ENCODE measurements at regions of chr16 and their contacts with region 1.

Region 1: DNA sequence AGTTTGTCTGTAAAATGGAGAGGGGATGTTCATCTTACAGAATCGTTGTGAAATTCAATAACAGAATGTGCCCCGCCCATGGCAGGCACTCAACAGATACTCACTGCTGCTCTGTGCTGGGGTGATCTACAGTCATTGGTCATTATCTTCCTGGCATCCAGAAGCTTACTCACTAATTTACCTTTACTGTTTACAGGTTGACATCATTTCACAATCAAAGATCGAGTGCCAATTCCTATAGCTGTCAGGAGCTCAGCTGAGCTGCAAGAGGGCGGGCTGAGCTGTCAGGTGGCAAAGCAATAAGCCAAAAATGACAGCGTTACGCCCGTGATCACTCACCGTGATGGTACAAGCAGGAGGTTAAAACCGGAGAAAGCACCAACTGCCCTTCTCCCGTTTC is 51.2 kb downstream of the LITAF start:
- DNase-seq: no peak
- ATAC-seq: no peak
- H3K4me3 Mint-ChIP-seq: no peak overlapping the region
- H3K27ac Mint-ChIP-seq: no peak overlapping the region
- H3K4me1 Mint-ChIP-seq: peaks cover 13% of the 10 kb centered on the region
- H3K27me3 Mint-ChIP-seq: no peaks in the 10 kb centered on the region
- CTCF ChIP-seq: no peak

Region 2: DNA sequence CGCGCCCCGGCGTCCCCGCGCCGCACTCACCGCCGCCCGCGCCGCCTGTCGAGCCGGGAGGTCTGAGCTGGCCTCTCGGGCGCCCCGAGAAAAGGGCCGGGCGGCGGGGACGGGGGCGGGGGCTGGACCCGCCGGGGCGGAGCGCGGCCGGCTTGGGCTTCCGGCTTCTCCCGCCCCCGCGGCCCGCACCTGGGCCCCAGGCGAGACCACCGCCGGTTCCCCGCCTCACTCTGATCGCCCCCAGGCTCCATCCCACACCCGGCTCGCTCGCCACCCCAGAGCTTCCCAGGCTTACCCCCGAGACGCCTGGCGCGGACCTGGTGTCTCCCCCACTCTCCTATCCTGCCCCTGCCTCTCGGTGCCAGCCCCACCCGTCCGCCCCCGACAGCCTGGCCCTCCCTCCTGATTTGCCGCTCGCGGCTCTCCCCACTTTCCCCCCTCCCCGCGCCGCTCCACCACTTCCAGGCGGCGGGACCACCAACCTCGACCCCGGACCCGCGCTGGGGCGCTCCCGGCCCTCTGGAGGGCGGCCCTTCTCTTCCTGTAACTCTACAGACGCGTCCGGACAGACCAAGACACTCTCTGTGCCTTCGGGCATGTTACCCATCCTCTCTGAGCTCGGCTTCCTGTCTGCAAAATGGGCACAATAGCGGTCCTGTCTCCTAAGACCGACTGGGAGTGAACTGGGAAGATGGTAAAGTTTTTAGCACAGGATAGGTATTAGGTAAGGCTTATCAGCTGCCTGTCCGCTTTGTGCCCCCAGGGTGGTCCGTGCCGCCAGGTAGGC is 51.6 kb after region 1 on chr16 and contains the start of gene LITAF:
- CTCF ChIA-PET with region 1: interaction called, 14 read pairs
- POLR2A ChIA-PET with region 1: interaction called, 3 read pairs
- DNase-seq: peak; percentile 59
- ATAC-seq: peak; percentile 67
- H3K4me3 Mint-ChIP-seq: peak within 1 kb of the TSS; percentile 81
- H3K27ac Mint-ChIP-seq: peak within 1 kb of the TSS; percentile 92
- H3K4me1 Mint-ChIP-seq: peaks cover 38% of the 10 kb centered on the region
- H3K27me3 Mint-ChIP-seq: peaks cover 61% of the 10 kb centered on the region
- CTCF ChIP-seq: no peak
- total RNA-seq, gene LITAF: 72.4 to 77.7 TPM (median 73.0 TPM) in 3 replicates

Region 3: GRCh38 chr16:11651796-11652195 is 116.3 kb after region 1 on chr16:
- CTCF ChIA-PET with region 1: interaction called, 11 read pairs
- POLR2A ChIA-PET with region 1: no interaction called
- DNase-seq: no peak
- ATAC-seq: no peak
- H3K4me3 Mint-ChIP-seq: no peak overlapping the region
- H3K27ac Mint-ChIP-seq: no peak overlapping the region
- H3K4me1 Mint-ChIP-seq: no peaks in the 10 kb centered on the region
- H3K27me3 Mint-ChIP-seq: no peaks in the 10 kb centered on the region
- CTCF ChIP-seq: no peak

Region 4: DNA sequence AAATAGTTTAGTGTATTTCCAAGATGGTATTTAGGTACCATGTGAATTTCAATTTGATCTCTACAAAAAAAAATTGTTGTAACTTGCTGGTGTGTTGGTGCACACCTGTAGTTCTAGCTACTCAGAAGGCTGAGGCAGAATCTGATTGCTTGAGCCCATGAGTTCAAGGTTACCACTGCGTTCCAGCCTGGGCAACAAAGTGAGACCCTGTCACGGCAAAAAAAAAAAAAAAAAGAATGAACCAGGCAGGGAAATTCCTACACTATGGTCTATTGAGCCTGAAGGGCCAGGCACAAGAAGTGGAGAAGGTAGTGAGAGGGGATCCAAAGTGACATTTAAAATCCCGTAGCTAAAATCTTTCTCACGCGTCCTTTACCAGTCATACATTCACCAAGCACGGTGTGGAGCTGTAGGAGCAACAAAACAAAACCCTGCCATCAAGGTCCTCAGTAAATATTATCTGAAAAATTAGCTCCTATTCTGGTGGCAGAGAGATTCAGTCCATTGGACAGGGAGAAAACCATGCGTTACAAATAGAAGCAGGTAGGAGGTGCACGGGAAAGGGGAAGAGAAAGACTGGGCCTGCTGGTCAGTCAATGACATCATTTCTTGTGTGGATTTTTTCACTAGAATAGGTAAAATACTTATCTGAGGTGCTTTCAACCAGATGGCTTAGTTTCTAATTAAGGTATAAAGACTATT is 179.9 kb after region 1 on chr16:
- CTCF ChIA-PET with region 1: interaction called, 25 read pairs
- POLR2A ChIA-PET with region 1: no interaction called
- DNase-seq: no peak
- ATAC-seq: no peak
- H3K4me3 Mint-ChIP-seq: no peak overlapping the region
- H3K27ac Mint-ChIP-seq: no peak overlapping the region
- H3K4me1 Mint-ChIP-seq: peaks cover 9% of the 10 kb centered on the region
- H3K27me3 Mint-ChIP-seq: no peaks in the 10 kb centered on the region
- CTCF ChIP-seq: no peak

Measured in WTC11 (cell line).